PC-9 (cell line): ENCODE measurements at regions of chrX and their contacts with region 1.

Region 1: DNA sequence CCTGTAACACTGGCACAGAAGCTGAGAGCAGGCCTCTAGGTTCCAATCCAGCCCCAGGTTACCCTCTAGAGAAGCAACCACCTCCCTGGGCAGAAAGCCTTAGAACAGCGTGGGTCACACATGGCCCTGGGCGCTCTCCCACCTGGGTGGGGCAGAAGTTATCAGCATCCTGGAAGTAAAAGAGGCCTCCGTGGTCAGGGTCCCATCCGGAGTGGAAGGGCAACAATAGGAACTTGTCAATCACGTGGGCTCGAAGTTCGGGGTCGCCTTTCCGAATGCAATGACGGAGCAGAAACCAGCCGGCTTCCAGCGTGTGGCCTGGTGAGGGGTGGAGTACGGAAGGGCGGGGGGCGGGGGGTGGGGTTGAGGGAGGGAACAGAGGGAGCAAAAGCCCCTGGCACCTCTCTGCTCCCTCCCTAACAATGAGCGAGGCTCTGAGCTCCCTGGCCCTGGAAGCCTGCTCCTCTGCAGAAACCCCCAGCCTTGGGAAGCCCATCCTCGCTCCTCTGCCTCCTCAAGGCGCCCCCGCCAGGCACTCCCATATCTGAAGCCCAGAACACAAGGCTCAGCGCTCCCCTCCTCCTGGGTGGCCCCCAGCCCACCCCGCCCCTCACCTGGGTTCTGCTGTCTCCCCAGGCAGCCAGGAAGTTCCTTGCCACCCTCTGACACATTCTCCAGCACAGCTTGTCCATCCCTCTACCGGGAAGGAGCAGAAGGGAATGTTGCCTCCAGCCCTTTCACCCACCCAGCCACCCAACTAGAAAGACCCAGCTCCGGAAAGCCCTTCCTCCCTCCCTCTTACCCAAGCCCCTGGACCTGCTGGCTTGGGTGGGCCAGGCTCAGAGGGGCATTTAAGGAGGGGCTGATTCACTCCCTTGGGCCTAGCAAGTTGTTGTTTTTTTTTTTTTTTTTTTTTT is 2.8 kb downstream of the RENBP start:
- DNase-seq: peak in 1 of 2 experiments; percentile 38
- H3K4me3 ChIP-seq: no peak overlapping the region
- H3K27ac ChIP-seq: no peak overlapping the region
- H3K4me1 ChIP-seq: no peaks in the 10 kb centered on the region
- H3K27me3 ChIP-seq: no peaks in the 10 kb centered on the region
- CTCF ChIP-seq: no peak

Region 2: GRCh38 chrX:153724252-153725040 is 217.1 kb before region 1 on chrX and contains the starts of genes ABCD1 and BCAP31:
- CTCF ChIA-PET with region 1: no interaction called
- POLR2A ChIA-PET with region 1: no interaction called
- intact Hi-C with region 1: no loop called
- DNase-seq: peak; percentile 76 to 97
- H3K4me3 ChIP-seq: peak within 1 kb of the TSS; percentile 85
- H3K27ac ChIP-seq: peak within 1 kb of the TSS; percentile 91
- H3K4me1 ChIP-seq: peaks cover 34% of the 10 kb centered on the region
- H3K27me3 ChIP-seq: no peaks in the 10 kb centered on the region
- CTCF ChIP-seq: no peak
- total RNA-seq, gene ABCD1: 40.0 and 44.9 TPM in 2 replicates
- total RNA-seq, gene BCAP31: 522 and 541 TPM in 2 replicates

Region 3: DNA sequence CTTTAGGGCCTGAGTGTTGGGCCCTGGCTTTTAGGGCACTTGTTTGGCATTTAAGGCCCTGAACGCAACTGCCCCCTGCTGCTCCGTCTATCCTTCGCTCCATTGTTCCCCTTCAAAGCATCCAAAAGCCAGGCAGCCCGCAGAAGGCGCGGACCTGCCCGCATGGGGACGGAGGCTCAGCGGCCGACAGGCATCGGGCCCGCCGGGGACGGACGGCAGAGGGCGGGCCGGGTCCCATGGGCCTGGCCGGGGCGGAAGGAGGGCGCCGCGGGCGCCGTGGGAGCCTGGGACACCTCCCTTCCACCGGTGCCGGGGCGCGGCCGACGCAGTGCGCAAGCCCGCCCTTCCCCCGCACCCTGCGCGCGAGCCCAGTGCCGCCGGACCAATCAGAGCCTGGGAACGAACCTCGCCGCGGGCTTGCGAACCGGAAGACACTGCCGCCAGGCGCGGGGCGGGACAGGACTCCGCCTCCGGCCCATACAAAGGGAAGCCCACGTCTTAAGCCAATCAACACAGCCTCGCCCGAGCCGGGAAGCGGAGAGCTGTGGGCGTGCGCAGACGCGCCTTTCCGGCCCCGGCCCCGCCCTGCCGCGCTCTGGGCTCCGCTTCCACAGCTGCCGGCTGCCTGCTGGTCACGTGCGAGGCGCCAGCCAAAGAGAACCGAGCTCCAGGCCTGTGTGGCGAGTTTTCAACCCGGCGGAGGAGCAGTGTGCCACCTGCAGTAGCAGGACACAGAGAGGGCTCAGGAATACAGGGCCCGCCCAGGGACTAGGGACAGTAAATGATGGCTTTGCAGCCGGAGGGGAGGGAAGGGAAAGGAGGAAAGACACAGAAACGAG is 13.5 kb before region 1 on chrX:
- CTCF ChIA-PET with region 1: interaction called, 6 read pairs
- POLR2A ChIA-PET with region 1: interaction called, 11 read pairs
- intact Hi-C with region 1: no loop called
- DNase-seq: peak; percentile 92 to 99
- H3K4me3 ChIP-seq: peak overlapping the region; percentile 86
- H3K27ac ChIP-seq: peak overlapping the region; percentile 86
- H3K4me1 ChIP-seq: peaks cover 17% of the 10 kb centered on the region; the same call in 1 of the 2 replicates
- H3K27me3 ChIP-seq: no peaks in the 10 kb centered on the region
- CTCF ChIP-seq: no peak; the same call in 1 of the 2 replicates

Region 4: DNA sequence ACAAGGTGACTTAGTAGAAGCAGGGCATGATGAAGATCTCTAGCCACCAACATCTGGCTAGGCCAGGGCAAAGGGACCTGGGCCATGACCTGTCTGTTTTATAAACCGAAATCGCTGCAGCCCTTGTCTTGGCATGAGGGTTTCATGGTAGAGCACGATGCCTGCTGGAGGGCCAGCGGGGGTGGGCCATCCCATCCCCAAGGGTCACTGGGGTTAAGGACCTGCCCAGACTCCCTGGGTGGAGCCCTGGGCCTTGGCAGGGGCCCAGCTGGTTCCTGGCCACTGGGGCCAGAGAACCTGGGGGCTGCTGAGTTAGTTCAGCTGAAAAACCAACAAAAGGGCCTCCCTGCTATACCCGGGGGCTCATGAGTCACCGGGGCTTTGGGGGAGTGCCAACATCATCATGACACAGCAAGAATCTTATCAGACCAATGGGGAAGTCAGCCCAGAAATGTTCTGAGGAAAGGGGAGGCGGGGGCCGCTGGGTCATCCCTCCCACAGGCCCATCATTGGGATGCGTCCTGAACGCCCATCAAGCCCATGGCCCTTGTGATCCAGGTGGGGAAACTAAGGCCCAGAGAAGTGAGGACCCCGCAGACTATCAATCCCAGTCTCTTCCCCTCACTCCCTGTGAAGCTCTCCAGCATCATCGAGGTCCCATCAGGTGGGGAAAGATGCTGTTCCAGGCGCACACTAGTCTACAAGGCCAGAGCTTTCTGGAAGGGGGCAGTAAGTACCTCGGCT is 600.3 kb after region 1 on chrX:
- CTCF ChIA-PET with region 1: interaction called, 14 read pairs
- POLR2A ChIA-PET with region 1: no interaction called
- intact Hi-C with region 1: no loop called
- DNase-seq: peak; percentile 93 to 97
- H3K4me3 ChIP-seq: peak overlapping the region; percentile 99
- H3K27ac ChIP-seq: peak overlapping the region; percentile 100
- H3K4me1 ChIP-seq: peaks cover 58% of the 10 kb centered on the region
- H3K27me3 ChIP-seq: no peaks in the 10 kb centered on the region
- CTCF ChIP-seq: no peak